Cardiac septum (tissue), 1 donor: ENCODE measurements at regions of chr18 and their contacts with region 1.

Region 1: DNA sequence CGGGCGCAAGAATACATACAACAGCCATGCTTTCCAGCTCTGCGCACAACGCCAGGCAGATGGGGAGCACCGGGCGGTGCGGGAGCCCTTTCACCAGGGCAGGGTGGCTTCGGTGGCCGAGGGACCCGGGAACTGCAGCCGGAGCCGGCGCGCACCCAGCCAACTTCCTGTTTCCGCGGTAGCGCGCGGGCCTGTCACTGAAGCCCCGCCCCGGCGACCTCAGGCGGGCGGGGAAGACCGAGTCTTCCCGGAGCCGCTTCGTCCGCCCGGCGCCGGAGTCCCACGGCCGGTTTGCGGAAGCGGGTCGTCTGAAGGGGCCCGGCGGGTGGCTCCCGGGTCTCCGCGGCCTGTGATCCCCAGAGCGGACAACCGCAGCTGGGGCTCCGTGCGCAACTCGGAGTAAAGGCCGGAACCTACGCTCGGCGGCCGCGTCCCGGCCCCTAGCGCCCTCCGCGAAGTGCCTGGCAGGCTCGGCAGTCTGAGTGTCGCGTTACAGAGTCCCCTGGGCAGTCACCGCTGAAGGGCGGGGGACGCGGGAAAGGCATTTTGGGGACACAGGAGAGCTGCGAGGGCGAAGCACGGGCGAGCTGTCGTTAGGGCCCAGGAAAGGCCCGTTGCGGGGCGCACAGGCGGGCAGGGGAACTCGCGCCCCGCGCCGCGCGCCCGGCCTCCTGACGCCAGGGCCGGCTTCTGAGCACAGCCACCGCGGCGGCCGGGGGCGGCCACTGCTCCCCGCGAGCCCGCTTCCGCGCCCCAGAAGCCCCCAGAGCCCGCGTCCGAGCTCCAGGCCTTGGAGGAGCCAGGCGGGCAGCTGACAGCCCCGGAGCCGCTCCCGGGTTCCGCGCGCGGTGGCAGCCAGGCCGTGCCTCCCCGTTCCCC is at the start of gene MPPE1:
- DNase-seq: peak; percentile 95
- total RNA-seq, gene MPPE1: 39.9 TPM

Region 2: GRCh38 chr18:11411048-11411447 is 497.4 kb before region 1 on chr18:
- intact Hi-C with region 1: no loop called
- DNase-seq: no peak

Region 3: DNA sequence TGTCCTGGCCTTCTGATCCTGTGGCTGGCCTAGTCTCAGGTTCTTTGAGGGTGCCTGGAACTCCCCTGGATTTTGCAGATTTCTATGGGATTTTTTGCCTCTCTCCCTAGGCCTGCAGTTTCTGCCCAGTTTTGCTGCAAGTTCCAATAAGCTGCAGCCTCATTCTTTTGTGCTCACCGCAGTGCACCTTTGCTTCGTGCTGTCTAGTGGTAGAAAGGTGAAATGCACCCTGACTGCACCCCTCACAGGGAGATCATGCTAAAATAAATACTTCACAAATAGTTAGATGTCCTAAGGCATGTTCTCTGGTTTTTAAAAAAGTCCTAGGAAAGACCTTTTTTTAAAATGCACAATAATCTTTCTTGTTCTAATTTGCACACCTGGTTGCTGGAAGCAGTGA is 146.9 kb before region 1 on chr18:
- intact Hi-C with region 1: no loop called
- DNase-seq: no peak

Region 4: GRCh38 chr18:11828786-11829432 is 79.5 kb before region 1 on chr18:
- intact Hi-C with region 1: no loop called
- DNase-seq: no peak

Region 5: GRCh38 chr18:11851146-11851805 is 57.1 kb before region 1 on chr18 and contains the start of gene CHMP1B:
- intact Hi-C with region 1: loop called (anchors 2 kb)
- DNase-seq: peak; percentile 99
- total RNA-seq, gene CHMP1B: 28.2 TPM